Cardiac septum (tissue), 1 donor: ENCODE measurements at regions of chr4 and their contacts with region 1.

Region 1: DNA sequence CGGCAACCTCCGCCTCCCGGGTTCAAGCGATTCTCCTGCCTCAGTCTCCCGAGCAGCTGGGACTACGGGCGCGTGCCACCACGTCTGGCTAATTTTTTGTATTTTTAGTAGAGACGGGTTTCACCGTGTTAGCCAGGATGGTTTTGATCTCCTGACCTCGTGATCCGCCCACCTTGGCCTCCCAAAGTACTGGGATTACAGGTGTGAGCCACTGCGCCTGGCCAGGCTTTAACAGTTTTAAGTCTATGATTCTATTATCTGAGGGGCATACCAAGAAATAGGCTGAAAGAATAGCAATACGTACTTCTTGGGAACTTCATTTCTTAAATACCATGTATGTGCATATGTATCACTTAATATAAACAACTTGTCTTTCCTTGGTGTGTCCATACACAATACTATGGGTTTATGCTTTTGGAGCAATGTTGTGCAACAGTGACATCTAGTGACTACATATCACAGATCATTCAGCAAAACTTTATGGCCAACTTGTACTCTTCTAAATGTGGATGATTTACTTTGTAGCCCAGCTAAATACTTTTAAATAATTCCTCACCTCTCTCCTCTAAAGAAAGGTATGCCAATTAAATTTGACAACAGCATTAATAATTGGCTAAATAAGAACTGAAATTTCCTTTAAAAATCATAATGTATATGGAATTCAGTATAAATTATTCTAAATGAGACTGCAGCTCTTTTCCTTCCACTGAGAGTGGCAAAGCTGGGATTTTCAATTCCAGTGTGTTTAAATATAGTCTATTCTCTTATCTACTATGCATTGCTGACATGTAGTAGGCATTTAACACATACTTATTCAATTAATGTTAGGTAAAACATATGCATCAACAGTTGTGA is 10.4 kb downstream of the SLC9B1 start:
- DNase-seq: no peak

Region 2: GRCh38 chr4:102430461-102430910 is 578.6 kb before region 1 on chr4:
- intact Hi-C with region 1: loop called (anchors 5 kb)
- DNase-seq: no peak

Region 3: DNA sequence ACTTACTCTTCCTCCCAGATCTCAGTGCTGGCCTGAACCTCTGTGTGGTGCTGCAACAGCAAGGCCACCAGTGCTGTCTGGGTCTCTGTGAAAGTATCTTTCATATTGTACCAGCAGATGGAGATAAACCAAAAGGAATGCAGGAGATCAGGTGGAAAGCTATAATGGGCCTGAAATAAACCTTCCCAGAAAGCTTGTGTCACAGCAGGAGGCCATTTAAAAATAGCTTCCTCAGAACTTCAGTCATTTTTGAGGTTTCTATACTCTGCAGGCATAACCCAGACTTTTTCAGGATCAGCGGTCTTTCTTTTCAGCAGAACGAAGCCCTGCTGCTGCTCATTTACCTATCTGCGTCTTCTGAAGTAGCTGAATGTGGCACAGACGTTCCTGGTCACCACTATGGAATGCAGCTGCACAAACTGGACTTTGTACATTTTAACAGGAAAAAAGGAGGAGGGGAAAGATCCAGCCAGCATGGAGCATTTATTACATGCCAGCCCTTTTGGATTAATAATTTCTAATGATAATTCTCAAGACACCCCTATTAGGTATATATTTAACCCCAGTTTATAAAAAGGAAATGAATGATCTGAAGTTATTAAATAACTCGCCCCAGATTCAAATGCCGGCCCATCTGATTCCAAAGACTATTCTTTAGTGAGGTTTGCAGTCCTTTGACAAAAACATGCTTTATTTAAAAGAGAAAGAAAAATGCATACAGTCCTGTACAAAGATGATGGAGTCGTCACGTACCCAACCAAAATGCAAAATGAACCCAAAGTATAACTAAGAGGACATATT is 388.2 kb before region 1 on chr4:
- intact Hi-C with region 1: loop called (anchors 1 kb)
- DNase-seq: no peak

Region 4: GRCh38 chr4:102945066-102945465 is 64.0 kb before region 1 on chr4:
- intact Hi-C with region 1: no loop called
- DNase-seq: no peak

Region 5: GRCh38 chr4:103075901-103076739 is 67.0 kb after region 1 on chr4:
- intact Hi-C with region 1: loop called (anchors 5 kb)
- DNase-seq: peak; percentile 86